ENCODE measurements at regions of chr11 and their contacts with region 1.

Region 1: GRCh38 chr11:34266090-34266912 is 91.5 kb downstream of the ABTB2 start:
- DNase-seq: peak; percentile 99
- H3K4me3 ChIP-seq: no peak overlapping the region
- H3K27ac ChIP-seq: peak overlapping the region; percentile 65
- H3K4me1 ChIP-seq: peaks cover 47% of the 10 kb centered on the region
- H3K27me3 ChIP-seq: no peaks in the 10 kb centered on the region
- CTCF ChIP-seq: no peak

Region 2: GRCh38 chr11:34226210-34226609 is 40.1 kb before region 1 on chr11:
- CTCF ChIA-PET with region 1: no interaction called
- POLR2A ChIA-PET with region 1: interaction called, 16 read pairs
- intact Hi-C with region 1: no loop called
- DNase-seq: no peak
- H3K4me3 ChIP-seq: no peak overlapping the region
- H3K27ac ChIP-seq: no peak overlapping the region
- H3K4me1 ChIP-seq: peaks cover 14% of the 10 kb centered on the region
- H3K27me3 ChIP-seq: no peaks in the 10 kb centered on the region
- CTCF ChIP-seq: 0 out of 2 replicates have a peak, but pooled peaks have one; percentile 18

Region 3: DNA sequence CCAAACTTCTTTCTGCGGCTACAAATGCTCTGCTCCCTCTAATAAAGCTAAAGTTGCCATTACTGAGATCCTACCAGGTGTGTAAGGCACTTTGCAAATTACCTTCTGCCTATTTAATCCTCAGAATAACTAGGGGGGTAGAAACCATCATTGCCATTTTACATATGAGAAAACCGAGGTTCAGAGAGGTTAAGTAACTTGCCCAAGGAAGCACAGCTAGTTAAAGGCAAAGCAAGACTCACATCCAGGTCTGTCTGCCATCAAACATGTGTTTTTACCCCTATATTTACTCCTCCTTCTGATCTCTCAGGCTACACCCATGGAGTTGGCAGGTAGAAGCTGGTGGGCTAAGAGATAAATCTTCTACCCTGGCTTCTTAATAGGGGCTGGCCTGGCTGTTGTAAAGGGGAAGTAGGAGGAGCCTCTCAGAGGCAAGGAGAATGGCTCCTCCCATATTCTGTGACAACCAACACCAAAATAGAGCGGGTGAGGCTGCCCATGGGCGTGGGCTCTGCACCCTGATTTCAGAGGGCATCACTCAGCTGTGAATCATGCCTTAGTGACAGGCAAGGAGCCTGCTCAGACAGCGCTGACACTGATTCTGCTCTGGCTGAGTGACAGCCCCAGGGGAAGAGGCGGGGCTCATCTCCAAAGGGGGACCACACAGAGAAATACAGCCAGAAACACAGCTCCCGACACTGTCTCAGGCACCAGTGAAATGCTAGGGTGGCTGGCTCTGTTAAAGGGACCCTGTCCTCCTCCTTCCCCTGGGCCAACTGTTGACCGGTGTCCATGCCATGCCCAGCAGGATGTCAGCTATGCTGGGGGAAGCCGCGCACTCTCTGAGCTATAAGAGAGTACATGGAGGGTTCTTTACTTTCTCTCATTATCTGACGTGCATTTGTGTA is 15.3 kb before region 1 on chr11:
- CTCF ChIA-PET with region 1: no interaction called
- POLR2A ChIA-PET with region 1: interaction called, 13 read pairs
- intact Hi-C with region 1: no loop called
- DNase-seq: peak; percentile 94
- H3K4me3 ChIP-seq: peak overlapping the region; percentile 1
- H3K27ac ChIP-seq: no peak overlapping the region
- H3K4me1 ChIP-seq: peaks cover 14% of the 10 kb centered on the region
- H3K27me3 ChIP-seq: no peaks in the 10 kb centered on the region
- CTCF ChIP-seq: no peak